Breast epithelium (tissue), 4 donors: ENCODE measurements at regions of chr5 and their contacts with region 1.

Region 1: GRCh38 chr5:92730486-92730885 is 850.5 kb downstream of the NR2F1-AS1 start:
- DNase-seq: no peak
- H3K4me3 ChIP-seq: no peak overlapping the region
- H3K27ac ChIP-seq: no peak overlapping the region
- H3K4me1 ChIP-seq: no peaks in the 10 kb centered on the region
- H3K27me3 ChIP-seq: no peaks in the 10 kb centered on the region
- CTCF ChIP-seq: no peak
- POLR2A ChIP-seq: no peak

Region 2: DNA sequence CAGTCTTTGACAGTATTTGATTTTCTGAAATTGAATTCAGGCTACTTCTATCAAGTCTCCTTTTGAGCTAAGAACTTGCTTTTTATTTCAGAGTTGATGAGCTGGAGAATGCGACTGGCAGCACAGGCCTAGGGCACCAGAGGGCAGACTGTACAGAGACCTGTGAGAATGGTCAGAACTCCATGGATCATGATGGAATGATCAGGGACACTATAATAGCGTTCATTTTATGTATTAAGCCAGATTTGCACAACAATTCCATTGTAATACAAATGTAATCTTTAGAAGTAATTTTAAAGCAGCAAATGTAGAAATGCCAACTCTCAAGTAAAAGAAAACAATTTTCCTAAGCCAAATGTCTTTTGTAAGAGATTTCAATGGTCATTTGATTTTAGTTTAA is 51.8 kb before region 1 on chr5:
- intact Hi-C with region 1: no loop called
- DNase-seq: no peak
- H3K4me3 ChIP-seq: no peak overlapping the region
- H3K27ac ChIP-seq: no peak overlapping the region
- H3K4me1 ChIP-seq: no peaks in the 10 kb centered on the region
- H3K27me3 ChIP-seq: no peaks in the 10 kb centered on the region
- CTCF ChIP-seq: no peak
- POLR2A ChIP-seq: no peak

Region 3: GRCh38 chr5:92713208-92713816 is 17.2 kb before region 1 on chr5:
- intact Hi-C with region 1: no loop called
- DNase-seq: no peak
- H3K4me3 ChIP-seq: no peak overlapping the region
- H3K27ac ChIP-seq: no peak overlapping the region
- H3K4me1 ChIP-seq: no peaks in the 10 kb centered on the region
- H3K27me3 ChIP-seq: no peaks in the 10 kb centered on the region
- CTCF ChIP-seq: no peak
- POLR2A ChIP-seq: no peak

Region 4: DNA sequence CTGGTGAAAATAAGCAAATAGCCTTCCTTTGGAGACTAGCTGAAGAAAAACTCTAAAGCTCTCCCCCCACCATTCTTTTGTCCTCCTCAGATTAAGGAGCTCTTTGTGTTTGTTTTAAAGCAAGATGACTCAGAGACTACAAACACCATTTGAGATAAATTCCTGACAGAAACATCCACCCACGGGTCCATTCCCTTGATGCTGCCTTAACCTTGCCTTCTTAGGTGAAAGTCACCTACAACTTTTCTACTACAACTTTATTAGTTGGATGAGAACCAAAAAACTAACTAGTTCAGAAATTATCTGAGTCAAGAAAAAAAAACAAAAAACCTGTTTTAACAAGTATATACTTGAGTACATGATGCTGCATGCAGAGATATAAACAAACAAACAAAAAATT is 19.5 kb after region 1 on chr5:
- intact Hi-C with region 1: loop called (anchors 2 kb)
- DNase-seq: no peak
- H3K4me3 ChIP-seq: no peak overlapping the region
- H3K27ac ChIP-seq: no peak overlapping the region
- H3K4me1 ChIP-seq: no peaks in the 10 kb centered on the region
- H3K27me3 ChIP-seq: no peaks in the 10 kb centered on the region
- CTCF ChIP-seq: no peak
- POLR2A ChIP-seq: no peak